Left cardiac atrium (tissue), 4 donors: ENCODE measurements at regions of chr18 and their contacts with region 1.

Region 1: DNA sequence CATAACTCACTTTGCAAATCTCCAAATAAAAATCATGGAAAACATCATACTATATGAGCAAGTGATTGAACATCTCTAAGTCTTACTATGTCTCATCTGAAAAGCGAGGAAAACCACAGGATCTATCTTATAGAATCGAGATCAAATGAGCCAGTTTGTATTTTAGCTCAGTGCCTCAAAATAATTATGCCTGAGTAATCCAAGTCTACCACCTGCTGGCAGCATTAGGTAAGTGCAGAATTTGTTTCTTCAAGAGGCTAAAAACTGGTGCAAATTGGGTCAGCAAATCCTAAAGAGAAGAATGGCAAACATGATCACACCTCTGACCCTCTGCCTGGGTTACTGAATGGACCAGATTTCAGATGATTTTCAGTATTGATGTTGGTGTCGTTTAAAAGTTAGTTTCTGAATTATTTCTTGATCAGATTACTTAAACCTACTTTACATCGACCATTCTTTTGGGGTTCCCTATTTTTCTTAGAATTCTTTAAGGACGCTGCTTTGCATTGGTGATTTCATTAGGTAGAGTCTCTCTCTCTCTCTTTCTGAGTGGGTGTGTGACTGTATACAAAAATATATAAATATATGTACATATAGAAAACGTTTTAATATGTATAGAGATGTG is 12.7 kb upstream of the FHOD3 start:
- DNase-seq: no peak
- ATAC-seq: peak in 1 of 2 donors; percentile 41

Region 2: DNA sequence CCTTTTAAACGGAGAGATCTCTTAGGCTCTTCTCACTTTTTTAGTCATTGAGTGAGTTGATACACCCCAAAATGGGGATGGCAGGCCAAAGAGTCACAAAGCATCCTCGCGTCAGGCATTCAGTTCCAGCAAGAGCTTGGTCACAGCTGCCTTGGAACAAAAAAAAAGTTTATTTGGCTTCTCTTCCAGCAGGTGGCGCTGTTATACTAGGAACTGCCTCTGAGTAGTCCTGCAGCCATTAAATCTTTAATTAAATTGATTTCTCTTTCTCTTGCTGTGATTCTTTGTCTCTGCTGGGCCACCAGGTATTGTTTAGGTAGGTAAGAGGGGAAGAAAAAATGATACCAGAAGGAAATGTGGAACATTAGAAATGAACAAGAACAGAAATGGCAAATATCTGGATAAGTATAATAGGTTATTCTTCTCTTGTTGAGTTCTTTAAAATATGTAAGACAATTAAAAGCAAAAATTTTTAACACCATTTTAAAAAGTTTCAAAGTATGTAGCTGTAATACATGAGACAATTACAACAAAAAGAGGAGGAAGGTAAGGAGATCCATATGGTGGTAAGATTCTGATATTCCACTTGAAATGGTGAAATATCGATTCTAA is 528.2 kb before region 1 on chr18:
- intact Hi-C with region 1: loop called in 1 of 2 experiments (anchors 10 kb)
- DNase-seq: no peak
- ATAC-seq: peak; percentile 70 to 78

Region 3: DNA sequence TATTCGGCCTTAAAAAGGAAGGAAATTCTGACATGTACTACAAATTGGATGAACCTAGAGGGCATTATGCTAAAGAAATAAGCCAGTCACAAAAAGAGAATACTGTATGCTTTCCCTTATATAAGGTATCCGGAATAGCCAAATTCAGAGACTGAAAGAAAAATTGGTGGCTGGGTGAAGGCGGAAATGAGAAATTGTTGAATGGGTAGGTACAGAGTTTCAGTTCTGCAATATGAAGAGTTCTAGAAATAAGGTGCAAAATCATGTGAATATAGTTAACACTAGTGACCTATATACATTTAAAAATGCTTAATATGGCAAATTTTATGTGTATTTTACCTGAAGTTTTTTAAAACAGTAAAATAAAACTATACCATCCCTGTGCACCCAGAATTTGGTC is 269.2 kb before region 1 on chr18:
- intact Hi-C with region 1: loop called (anchors 2 to 5 kb)
- DNase-seq: no peak
- ATAC-seq: no peak

Region 4: GRCh38 chr18:36095936-36096519 is 188.8 kb before region 1 on chr18:
- intact Hi-C with region 1: loop called (anchors 1 to 5 kb)
- DNase-seq: no peak
- ATAC-seq: no peak

Region 5: DNA sequence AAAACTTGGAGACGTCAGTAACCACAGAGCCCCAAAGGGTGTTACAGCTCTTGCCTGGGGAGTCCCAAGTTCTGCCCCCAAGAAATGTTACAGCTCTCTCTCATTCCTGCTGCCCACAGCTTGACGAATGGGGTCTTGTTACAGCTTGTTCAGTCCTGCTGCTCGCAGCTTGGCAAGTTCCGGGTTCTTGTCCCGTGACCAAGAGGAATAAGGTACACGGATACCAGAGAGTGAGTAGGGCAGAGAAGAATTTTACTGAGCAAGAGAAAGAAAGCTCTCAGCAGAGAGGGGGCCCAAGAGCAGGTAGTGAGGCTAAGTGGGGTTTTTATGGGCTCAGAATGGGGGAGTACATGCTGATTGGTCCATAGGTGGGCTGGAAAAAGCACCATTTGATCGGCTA is 182.8 kb before region 1 on chr18:
- intact Hi-C with region 1: loop called in 1 of 2 experiments (anchors 5 kb)
- DNase-seq: no peak
- ATAC-seq: no peak